Dorsolateral prefrontal cortex (tissue), 120 donors: ENCODE measurements at regions of chr19 and their contacts with region 1.

Region 1: DNA sequence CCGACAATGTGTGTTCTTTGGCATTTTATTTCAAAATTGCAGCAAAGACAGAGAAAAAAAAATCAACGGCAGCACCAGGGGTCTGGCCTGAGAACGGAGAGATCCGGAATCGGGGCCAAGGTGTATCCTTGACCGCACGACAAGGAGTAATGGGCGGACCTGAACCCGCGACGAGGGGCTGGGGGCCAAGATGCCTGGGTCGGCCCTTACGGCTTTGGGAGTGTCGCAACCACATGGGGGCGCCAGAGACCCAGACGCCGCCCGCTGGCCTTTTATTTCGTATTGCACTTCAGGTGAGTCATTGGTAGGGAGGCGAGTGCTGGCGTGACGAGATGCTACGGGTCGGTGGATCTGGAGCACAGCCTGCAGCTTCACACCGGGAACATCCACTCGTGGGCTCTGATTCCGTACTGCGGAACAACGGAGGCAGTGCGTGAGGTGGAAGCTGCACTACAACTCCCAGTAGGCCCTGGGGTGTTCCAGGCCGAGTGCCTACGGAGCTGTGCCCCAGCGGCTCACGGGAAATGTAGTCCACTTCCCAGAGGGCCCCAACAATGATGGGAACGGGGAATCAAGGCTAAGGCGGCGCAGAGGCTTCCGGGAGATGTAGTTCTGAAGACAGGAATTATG is 15.7 kb downstream of the BCAT2 start:
- DNase-seq: peak; percentile 88 to 97 (median 96)
- H3K4me3 ChIP-seq: peak overlapping the region; percentile 15 to 78 (median 65)
- H3K27ac ChIP-seq: peak overlapping the region; percentile 47 to 95 (median 88)
- H3K27me3 ChIP-seq: no peaks in the 10 kb centered on the region
- CTCF ChIP-seq: peak; percentile 88 to 100 (median 98)

Region 2: DNA sequence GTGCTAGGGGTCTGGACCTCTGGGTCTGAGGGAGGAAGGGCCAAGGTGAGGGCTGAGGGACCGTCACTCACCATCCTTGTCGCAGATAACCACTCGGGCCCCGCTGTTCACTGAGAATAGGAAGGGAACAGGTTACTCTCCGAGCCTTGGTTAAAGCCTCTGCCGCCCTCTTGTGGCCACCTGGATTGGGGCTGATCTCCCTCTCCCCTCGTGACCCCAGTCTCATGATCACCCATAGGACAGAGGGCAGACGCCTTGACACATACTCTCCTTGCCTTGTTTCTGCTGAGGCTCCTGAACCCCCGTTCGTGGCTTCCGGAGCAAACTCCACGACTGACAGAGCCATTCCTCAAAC is 40.5 kb after region 1 on chr19:
- intact Hi-C with region 1: loop called (anchors 2 kb)
- DNase-seq: peak; percentile 87 to 96 (median 92)
- H3K4me3 ChIP-seq: peak overlapping the region; percentile 38 to 74 (median 59)
- H3K27ac ChIP-seq: peak overlapping the region in 57 of 59 donors; percentile 43 to 95 (median 81)
- H3K27me3 ChIP-seq: no peaks in the 10 kb centered on the region
- CTCF ChIP-seq: peak; percentile 76 to 97 (median 90)

Region 3: DNA sequence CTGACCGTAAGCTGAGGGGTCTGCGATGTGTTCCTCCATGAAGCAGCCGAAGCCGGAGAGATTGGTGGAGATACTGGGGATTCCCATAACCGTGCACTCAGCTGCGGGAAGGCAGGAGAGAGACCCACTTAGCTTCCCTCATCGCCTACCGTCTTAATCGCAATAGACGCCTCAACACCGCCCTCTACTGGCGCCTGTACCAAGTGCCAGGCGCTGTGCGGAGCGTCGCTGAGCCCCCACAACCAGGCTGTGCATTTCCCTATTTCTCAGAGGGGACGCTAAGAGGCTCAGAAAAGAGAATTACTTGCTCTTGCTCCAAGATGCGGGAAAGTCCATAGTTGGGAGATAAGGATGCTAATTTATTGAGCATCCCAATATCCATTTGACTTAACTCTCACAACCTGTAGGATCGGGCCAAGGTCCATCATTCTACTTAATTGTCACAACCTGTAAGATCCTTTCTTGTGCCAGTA is 175.8 kb after region 1 on chr19:
- intact Hi-C with region 1: loop called (anchors 2 to 5 kb)
- DNase-seq: peak in 9 of 10 donors; percentile 66 to 84 (median 77)
- H3K4me3 ChIP-seq: peak overlapping the region in 5 of 59 donors; percentile 1 to 25 (median 15)
- H3K27ac ChIP-seq: peak overlapping the region in 25 of 59 donors; percentile 2 to 81 (median 41)
- H3K27me3 ChIP-seq: no peaks in the 10 kb centered on the region
- CTCF ChIP-seq: peak; percentile 67 to 95 (median 89)

Region 4: DNA sequence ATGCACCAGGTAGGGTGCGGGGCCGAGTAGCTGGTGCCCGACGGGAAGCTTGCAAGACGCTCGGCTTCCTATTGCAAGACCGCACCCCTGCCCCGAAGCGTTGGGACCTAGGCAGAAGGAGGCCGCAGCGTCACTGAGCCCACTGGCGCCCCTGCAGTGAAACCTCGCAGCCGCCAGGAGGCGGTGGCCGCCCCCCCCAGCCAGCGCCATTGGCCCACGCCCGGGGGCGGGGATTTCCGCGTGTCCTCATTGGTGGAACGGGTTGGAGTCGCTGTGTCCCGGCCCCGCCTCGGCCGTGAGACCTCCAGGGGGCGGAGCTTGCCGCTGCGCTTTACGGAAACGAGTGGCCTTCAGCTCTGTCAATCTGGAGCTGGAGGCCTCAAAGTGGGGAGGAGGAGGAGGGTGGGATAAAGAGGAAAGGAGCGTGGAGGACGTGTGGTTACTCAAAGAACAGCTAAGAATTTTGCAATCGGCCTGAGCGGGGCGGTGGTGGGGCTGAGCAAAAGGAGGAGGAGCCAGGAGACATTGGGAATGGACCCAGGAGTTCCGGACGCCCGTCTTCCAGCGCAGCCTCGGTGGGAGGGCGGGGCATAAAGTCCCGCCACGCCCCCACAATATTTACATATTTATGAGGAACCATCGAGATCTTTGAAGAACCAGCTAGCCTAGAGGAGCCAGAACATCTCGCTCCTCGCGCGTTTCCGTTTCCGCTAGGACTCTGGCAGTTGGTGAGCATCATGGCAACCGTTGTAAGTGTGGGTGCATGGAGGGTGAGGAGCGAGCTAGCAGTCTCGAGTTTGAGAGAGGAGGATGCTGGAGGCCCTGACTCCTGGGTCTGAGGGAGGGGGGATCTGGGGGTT is 198.2 kb after region 1 on chr19 and contains the starts of genes GYS1 and RUVBL2:
- intact Hi-C with region 1: loop called in 1 of 2 experiments (anchors 10 kb)
- DNase-seq: peak; percentile 98 to 100 (median 99)
- H3K4me3 ChIP-seq: peak within 1 kb of the TSS; percentile 63 to 100 (median 93)
- H3K27ac ChIP-seq: peak within 1 kb of the TSS; percentile 73 to 99 (median 96)
- H3K27me3 ChIP-seq: no peaks in the 10 kb centered on the region
- CTCF ChIP-seq: peak; percentile 74 to 99 (median 96)
- total RNA-seq, gene GYS1: 17.6 to 67.9 (median 37.0) TPM
- total RNA-seq, gene RUVBL2: 39.7 to 85.0 (median 53.9) TPM